Dorsolateral prefrontal cortex (tissue), 120 donors: ENCODE measurements at regions of chr6 and their contacts with region 1.

Region 1: DNA sequence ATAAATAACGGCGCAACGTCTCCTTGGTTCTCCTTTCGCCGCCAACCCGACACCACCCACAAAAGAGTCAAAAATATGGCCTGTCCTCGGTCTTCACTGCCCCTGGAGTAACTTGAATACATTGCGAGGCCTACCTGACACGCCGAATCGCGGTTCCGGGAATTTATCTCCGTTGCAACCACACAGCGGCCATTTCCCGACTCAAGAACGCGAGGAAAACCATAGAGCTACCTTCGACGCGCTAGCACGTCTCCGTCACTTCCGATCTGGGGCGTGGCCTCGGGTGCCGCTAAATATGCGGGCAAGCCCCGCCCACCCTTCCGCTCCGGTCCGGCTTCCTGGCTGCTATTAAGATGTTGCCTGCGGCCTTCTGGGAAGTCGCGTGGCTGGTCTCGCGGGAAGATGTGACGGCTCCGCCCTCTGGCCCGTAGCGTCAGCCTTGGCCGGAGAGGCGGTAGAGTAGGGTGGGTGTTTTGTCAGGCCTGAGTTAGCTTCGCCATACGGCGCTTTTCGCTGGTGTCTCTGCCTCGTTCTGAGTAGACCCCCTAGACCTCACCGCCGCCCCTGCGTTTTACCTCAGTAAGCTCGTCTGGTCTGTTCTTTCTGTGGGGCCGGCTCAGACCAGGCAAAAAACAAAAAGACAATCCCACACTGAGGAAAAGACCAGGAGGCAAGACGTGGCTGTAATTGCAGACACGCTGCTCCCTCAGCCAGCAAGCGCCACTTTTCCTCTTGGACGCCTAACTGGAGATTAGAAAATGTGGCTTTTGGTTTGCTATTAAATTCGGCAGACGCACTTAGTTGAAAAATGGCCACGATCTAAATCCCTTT is at the start of gene BCLAF1:
- DNase-seq: peak; percentile 100
- H3K4me3 ChIP-seq: peak within 1 kb of the TSS; percentile 60 to 100 (median 95)
- H3K27ac ChIP-seq: peak within 1 kb of the TSS; percentile 95 to 100 (median 100)
- H3K27me3 ChIP-seq: no peaks in the 10 kb centered on the region
- CTCF ChIP-seq: peak in 17 of 56 donors; percentile 3 to 39 (median 15)
- total RNA-seq, gene BCLAF1: 105 to 231 (median 178) TPM

Region 2: DNA sequence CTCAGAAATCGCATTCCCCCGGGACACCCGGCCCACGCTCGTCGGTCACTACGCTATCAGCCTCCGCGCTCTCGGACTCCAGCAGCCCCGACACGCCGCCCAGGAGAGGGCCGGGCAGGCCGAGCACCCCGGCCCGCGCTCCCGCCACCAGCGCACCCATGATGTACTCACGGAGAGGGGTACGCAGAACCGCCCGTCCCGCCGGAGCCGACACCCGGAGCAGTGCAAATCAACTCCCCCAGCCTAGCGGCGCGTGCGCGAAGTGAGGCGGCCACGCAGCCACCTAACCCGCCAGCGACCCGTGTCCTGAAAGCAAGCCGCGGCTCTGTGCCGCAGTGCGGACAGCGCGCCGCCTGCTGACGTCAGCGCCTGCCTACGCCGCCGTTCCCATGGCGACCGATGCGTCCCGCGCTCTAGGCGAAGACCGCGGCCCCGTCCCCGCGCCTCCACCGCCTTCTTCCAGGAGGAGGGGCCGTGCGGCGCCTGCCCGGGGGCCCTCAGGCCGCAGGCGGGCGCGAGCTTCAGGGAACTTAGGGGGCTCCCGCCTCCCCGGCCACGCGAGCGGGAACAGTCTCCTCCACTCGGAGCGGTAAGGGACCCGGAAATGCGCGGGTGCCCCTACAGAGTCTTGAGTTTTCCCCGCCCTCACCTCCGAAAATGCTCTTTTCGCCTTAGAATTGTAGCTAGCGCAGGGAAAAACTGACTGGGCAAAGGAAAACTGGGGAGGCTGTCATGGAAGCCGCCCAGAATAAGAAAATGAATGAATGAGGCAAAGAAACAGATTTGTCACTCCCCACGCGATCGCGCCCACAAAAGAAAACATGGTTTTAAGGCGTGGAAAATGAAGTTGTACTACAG is 792.2 kb before region 1 on chr6 and contains the start of gene AHI1:
- intact Hi-C with region 1: loop called in 1 of 2 experiments (anchors 5 kb)
- DNase-seq: peak; percentile 87 to 98 (median 94)
- H3K4me3 ChIP-seq: peak within 1 kb of the TSS; percentile 69 to 97 (median 89)
- H3K27ac ChIP-seq: peak within 1 kb of the TSS; percentile 71 to 100 (median 96)
- H3K27me3 ChIP-seq: no peaks in the 10 kb centered on the region
- CTCF ChIP-seq: peak in 36 of 56 donors; percentile 2 to 64 (median 34)
- total RNA-seq, gene AHI1: 83.5 to 252 (median 142) TPM

Region 3: GRCh38 chr6:136249811-136250685 is 39.7 kb before region 1 on chr6 and contains the start of gene MTFR2:
- intact Hi-C with region 1: loop called (anchors 5 kb)
- DNase-seq: peak; percentile 77 to 96 (median 94)
- H3K4me3 ChIP-seq: peak within 1 kb of the TSS; percentile 44 to 93 (median 75)
- H3K27ac ChIP-seq: peak within 1 kb of the TSS in 6 of 59 donors; percentile 7 to 63 (median 42)
- H3K27me3 ChIP-seq: no peaks in the 10 kb centered on the region
- CTCF ChIP-seq: peak in 21 of 56 donors; percentile 12 to 47 (median 23)
- total RNA-seq, gene MTFR2: 0.28 to 2.8 (median 0.73) TPM in 49 of 120 experiments, not detected in the others

Region 4: GRCh38 chr6:136526196-136526930 is 236.6 kb after region 1 on chr6:
- intact Hi-C with region 1: loop called (anchors 2 to 5 kb)
- DNase-seq: peak; percentile 62 to 91 (median 87)
- H3K4me3 ChIP-seq: peak overlapping the region; percentile 35 to 81 (median 66)
- H3K27ac ChIP-seq: peak overlapping the region; percentile 66 to 99 (median 96)
- H3K27me3 ChIP-seq: no peaks in the 10 kb centered on the region
- CTCF ChIP-seq: peak in 48 of 56 donors; percentile 4 to 64 (median 46)

Region 5: DNA sequence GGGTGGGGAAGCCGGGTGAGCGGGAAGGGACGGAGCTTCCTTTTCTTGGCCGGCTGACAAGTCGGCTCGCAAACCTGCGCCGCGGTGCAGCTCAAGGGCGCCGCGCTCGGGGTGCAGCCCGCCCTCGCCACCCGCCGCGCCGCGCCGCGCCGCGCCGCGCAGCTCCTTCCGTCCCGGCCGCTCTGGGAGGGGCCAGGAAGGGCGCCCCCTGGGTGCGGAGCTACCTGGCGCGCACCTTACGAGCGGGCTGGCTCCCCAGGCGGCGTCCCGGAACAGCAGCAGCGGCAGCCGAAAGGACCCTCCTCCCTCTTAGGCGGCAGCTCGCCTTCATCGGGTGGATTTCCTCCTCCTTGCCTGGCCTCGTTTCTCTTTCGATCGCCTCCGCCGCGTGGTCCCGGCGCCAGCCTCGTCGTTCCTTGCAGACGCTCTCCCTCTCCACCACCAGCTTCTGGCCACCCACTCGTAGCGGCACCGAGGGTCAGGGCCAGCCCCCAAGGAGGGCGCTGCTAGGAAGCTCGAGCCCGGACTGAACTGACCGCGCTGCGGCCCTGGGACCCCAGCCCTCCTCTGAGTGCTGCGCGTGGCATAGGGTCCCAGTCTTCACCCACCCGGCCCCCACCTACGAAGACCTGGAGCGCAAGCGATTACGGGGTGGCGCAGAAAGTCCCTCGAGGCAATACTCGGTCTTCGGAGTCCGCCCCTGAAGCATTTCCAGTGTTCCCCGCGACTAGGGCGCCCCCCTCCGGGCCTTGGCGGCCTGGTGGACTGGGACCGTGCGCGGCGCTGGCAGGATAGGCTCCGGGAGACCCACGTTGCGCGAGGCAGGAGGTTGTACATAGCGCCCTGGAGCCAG is 502.8 kb after region 1 on chr6 and contains the start of gene MAP3K5:
- intact Hi-C with region 1: no loop called
- DNase-seq: peak; percentile 73 to 92 (median 88)
- H3K4me3 ChIP-seq: peak within 1 kb of the TSS; percentile 60 to 95 (median 83)
- H3K27ac ChIP-seq: peak within 1 kb of the TSS; percentile 41 to 98 (median 92)
- H3K27me3 ChIP-seq: no peaks in the 10 kb centered on the region
- CTCF ChIP-seq: peak; percentile 38 to 86 (median 73)
- total RNA-seq, gene MAP3K5: 26.2 to 70.0 (median 45.3) TPM